PC-3 (cell line): ENCODE measurements at regions of chr3 and their contacts with region 1.

Region 1: DNA sequence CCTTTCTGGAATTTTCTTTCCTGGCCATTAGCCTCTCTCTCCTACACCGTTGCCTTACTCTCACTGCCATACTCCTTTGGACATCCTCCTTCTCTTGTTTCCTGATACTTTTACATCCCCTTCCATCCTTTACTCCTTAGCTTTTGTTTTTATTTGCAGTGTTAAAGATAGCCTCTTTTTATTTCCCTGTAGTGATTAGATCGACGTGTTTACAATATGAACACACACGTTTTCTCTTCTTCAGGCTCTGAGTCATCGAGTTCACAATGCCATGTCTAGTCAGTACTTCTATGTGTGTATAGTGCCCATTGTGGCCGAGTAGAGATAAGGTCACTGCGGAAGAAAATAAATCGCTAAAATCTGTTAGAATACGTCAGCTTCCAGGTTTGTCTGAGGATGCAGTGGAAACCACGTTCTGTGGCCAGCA is 208.5 kb downstream of the LPP start:
- DNase-seq: peak; percentile 95
- ATAC-seq: peak; percentile 95
- H3K4me3 ChIP-seq: no peak overlapping the region
- H3K27ac ChIP-seq: peak overlapping the region; percentile 48
- H3K4me1 ChIP-seq: peaks cover 29% of the 10 kb centered on the region
- H3K27me3 ChIP-seq: no peaks in the 10 kb centered on the region
- CTCF ChIP-seq: peak; percentile 58

Region 2: DNA sequence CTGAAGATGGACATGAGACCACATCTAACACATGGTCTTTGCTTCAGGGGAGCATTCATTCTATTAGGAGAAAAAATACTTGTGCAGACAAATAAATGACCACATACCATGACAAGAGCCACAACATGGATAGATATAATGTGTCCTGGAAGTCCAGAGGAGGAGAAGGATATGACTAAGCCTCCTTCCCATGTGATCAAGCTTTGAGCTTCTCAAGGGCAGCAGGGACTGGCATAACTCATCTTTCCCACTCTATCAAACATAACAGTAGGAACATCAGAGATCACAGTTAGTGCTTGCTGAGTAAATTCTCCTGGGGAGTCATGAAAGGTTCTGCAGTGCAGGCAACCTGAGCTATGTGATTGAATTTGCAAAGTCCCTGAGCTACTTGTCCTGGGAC is 294.5 kb before region 1 on chr3:
- CTCF ChIA-PET with region 1: no interaction called
- POLR2A ChIA-PET with region 1: no interaction called
- intact Hi-C with region 1: loop called (anchors 5 kb)
- DNase-seq: peak; percentile 64
- ATAC-seq: peak; percentile 98
- H3K4me3 ChIP-seq: no peak overlapping the region
- H3K27ac ChIP-seq: no peak overlapping the region
- H3K4me1 ChIP-seq: peaks cover 9% of the 10 kb centered on the region
- H3K27me3 ChIP-seq: no peaks in the 10 kb centered on the region
- CTCF ChIP-seq: no peak

Region 3: DNA sequence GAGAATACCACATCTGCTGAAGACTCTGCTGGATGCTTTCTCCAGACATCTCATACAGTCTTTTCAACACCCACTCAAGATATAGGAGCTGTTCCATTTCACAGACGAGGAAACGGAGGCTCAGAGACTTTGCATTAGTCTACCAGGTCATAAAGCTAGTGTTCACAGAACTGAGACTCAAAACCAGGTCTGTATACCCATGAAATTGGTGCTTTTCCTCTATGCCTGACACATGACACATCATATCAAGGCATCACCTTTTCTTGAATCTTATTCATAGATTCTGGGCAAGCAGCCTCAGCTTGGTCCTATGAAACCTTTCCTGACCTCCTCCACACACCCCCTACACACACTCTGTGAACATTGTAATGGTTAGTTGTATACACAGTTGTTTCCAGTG is 107.2 kb before region 1 on chr3:
- CTCF ChIA-PET with region 1: no interaction called
- POLR2A ChIA-PET with region 1: no interaction called
- intact Hi-C with region 1: no loop called
- DNase-seq: no peak
- ATAC-seq: no peak
- H3K4me3 ChIP-seq: no peak overlapping the region
- H3K27ac ChIP-seq: no peak overlapping the region
- H3K4me1 ChIP-seq: peaks cover 15% of the 10 kb centered on the region
- H3K27me3 ChIP-seq: no peaks in the 10 kb centered on the region
- CTCF ChIP-seq: no peak

Region 4: GRCh38 chr3:188458756-188459155 is 96.3 kb after region 1 on chr3:
- CTCF ChIA-PET with region 1: no interaction called
- POLR2A ChIA-PET with region 1: no interaction called
- intact Hi-C with region 1: no loop called
- DNase-seq: no peak
- ATAC-seq: no peak
- H3K4me3 ChIP-seq: no peak overlapping the region
- H3K27ac ChIP-seq: no peak overlapping the region
- H3K4me1 ChIP-seq: no peaks in the 10 kb centered on the region
- H3K27me3 ChIP-seq: no peaks in the 10 kb centered on the region
- CTCF ChIP-seq: no peak

Region 5: DNA sequence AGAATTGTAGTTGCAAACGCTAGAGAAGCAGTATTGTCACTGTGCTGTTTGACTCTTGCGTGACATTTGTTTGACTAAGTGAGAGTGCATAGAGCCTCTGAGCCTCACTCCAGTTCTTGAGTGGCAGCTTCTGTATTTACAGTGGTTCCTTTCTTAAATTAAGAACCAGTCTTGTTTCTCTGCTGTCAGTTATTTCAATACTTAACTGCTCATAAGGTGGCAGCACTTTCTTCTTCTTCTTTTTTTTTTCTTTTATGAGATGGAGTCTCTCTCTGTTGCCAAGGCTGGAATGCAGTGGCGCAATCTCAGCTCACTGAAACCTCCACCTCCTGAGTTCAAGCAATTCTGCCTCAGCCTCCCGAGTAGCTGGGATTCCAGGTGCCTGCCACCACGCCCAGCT is 163.6 kb after region 1 on chr3:
- CTCF ChIA-PET with region 1: no interaction called
- POLR2A ChIA-PET with region 1: no interaction called
- intact Hi-C with region 1: loop called (anchors 5 kb)
- DNase-seq: peak; percentile 39
- ATAC-seq: no peak
- H3K4me3 ChIP-seq: no peak overlapping the region
- H3K27ac ChIP-seq: no peak overlapping the region
- H3K4me1 ChIP-seq: peaks cover 32% of the 10 kb centered on the region
- H3K27me3 ChIP-seq: no peaks in the 10 kb centered on the region
- CTCF ChIP-seq: no peak; the same call in 1 of the 2 replicates

Region 6: DNA sequence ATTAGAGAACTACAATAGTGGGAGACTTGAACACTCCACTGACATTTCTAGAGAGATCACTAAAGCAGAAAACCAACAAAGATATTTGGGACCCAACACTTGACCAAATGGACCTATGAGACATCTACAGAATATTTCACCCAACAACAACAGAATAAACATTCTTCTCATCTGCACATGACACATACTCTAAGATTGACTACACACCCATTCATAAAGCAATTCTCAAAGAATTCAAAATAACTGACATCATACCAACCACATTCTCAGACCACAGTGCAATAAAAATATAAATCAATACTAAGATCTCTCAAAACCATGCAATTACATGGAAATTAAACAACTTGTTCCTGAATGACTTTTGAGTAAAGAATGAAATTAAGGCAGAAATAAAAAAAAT is 265.2 kb after region 1 on chr3:
- CTCF ChIA-PET with region 1: no interaction called
- POLR2A ChIA-PET with region 1: no interaction called
- intact Hi-C with region 1: loop called (anchors 5 kb)
- DNase-seq: peak; percentile 91
- ATAC-seq: peak; percentile 91
- H3K4me3 ChIP-seq: 0 out of 2 replicates have a peak overlapping the region, but pooled peaks have one; percentile 5
- H3K27ac ChIP-seq: peak overlapping the region; percentile 88
- H3K4me1 ChIP-seq: peaks cover 41% of the 10 kb centered on the region
- H3K27me3 ChIP-seq: no peaks in the 10 kb centered on the region
- CTCF ChIP-seq: no peak